ENCODE measurements at regions of chr1 and their contacts with region 1.

Region 1: DNA sequence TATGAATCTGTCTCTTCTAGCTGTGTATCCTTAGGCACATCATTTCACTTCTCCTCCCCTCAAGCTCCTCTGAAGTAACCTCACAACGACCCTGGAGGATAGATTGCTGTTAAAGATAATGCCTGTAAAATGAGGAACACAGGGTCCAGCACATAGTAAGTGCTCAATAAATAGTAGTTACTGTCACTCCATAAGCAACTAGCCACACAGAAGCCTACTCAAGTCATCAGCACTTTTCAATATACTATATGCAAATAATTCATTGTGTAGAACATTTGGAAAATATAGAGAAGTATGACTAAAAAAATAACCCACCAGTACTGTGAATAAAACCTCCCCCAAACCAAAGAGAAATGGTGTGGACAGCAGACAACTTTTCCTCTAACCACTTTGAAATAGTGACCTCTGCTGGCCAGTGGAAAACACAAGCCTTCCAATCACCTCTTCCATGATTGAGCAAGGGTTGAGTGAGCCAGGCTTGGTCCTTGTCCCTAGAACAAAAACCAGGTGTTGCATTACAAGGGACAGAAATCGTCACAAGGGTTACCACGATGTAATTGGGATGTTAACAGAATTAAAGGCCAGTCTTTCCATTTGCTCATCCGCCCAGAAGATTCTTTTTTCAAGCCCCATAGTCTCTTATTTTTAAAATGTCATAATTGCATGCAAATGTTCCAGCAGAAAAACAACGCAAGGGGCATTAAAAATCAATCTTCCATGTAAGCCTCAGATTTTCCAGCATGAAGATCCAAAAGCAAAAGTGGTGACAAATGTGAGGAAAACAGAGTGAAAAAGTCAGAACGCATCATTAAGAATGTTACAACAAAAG is 15.7 kb upstream of the GLIS1 start:
- DNase-seq: peak; percentile 37 to 46
- H3K4me3 ChIP-seq: no peak overlapping the region
- H3K4me3 Mint-ChIP-seq: no peak overlapping the region
- H3K27ac Mint-ChIP-seq: no peak overlapping the region
- H3K4me1 ChIP-seq: 0 out of 2 replicates have a peak, but pooled peaks cover 4% of the 10 kb centered on the region
- H3K4me1 Mint-ChIP-seq: no peaks in the 10 kb centered on the region
- H3K27me3 ChIP-seq: no peaks in the 10 kb centered on the region
- H3K27me3 Mint-ChIP-seq: no peaks in the 10 kb centered on the region
- CTCF ChIP-seq: peak; percentile 41 to 44

Region 2: GRCh38 chr1:53715478-53715877 is 39.2 kb before region 1 on chr1:
- CTCF ChIA-PET with region 1: interaction called, 5 read pairs
- POLR2A ChIA-PET with region 1: no interaction called
- intact Hi-C with region 1: loop called (anchors 2 kb)
- DNase-seq: peak; percentile 40 to 43
- H3K4me3 ChIP-seq: no peak overlapping the region
- H3K4me3 Mint-ChIP-seq: no peak overlapping the region
- H3K27ac Mint-ChIP-seq: no peak overlapping the region
- H3K4me1 ChIP-seq: no peaks in the 10 kb centered on the region
- H3K4me1 Mint-ChIP-seq: no peaks in the 10 kb centered on the region
- H3K27me3 ChIP-seq: no peaks in the 10 kb centered on the region
- H3K27me3 Mint-ChIP-seq: peaks cover 5% of the 10 kb centered on the region
- CTCF ChIP-seq: peak; percentile 36 to 40